ENCODE measurements at regions of chrX and their contacts with region 1.

Region 1: GRCh38 chrX:97860226-97860625 is 976.5 kb downstream of the RPA4 start:
- DNase-seq: no peak
- ATAC-seq: no peak
- H3K4me3 Mint-ChIP-seq: no peak overlapping the region
- H3K27ac Mint-ChIP-seq: no peak overlapping the region
- H3K4me1 Mint-ChIP-seq: no peaks in the 10 kb centered on the region
- H3K27me3 Mint-ChIP-seq: no peaks in the 10 kb centered on the region
- CTCF ChIP-seq: no peak

Region 2: DNA sequence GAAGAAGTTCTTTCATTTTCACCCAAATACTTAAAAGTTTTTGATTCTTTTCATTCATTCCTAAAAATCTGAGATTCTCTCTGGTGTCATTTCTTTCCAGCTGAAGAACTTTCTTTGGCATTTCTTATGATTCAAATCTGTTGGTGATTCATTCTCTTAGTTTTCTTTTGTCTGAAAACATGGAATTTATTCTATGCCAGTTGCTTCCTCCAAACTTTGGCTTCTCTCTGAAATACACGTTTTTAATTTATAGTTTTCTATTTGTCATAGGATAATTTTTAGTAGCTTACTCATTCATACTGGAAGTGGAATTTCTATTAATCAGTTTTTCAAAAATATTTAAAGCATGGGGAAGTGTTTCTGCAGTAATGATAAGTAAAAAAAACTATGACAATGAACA is 35.5 kb after region 1 on chrX:
- CTCF ChIA-PET with region 1: no interaction called
- POLR2A ChIA-PET with region 1: no interaction called
- intact Hi-C with region 1: loop called (anchors 1 kb)
- DNase-seq: no peak
- ATAC-seq: no peak
- H3K4me3 Mint-ChIP-seq: no peak overlapping the region
- H3K27ac Mint-ChIP-seq: no peak overlapping the region
- H3K4me1 Mint-ChIP-seq: no peaks in the 10 kb centered on the region
- H3K27me3 Mint-ChIP-seq: no peaks in the 10 kb centered on the region
- CTCF ChIP-seq: no peak